ENCODE measurements at regions of chr14 and their contacts with region 1.

Region 1: GRCh38 chr14:61568572-61569131 is 126.7 kb upstream of the HIF1A start:
- DNase-seq: peak; percentile 71
- H3K4me3 Mint-ChIP-seq: peak overlapping the region; percentile 73
- H3K27ac Mint-ChIP-seq: peak overlapping the region; percentile 91
- H3K4me1 Mint-ChIP-seq: peaks cover 87% of the 10 kb centered on the region
- H3K27me3 Mint-ChIP-seq: no peaks in the 10 kb centered on the region

Region 2: GRCh38 chr14:61342486-61342885 is 226.2 kb before region 1 on chr14:
- CTCF ChIA-PET with region 1: no interaction called
- intact Hi-C with region 1: loop called (anchors 5 kb)
- DNase-seq: peak; percentile 86
- H3K4me3 Mint-ChIP-seq: peak overlapping the region; percentile 66
- H3K27ac Mint-ChIP-seq: peak overlapping the region; percentile 97
- H3K4me1 Mint-ChIP-seq: peaks cover 96% of the 10 kb centered on the region
- H3K27me3 Mint-ChIP-seq: no peaks in the 10 kb centered on the region

Region 3: GRCh38 chr14:61525293-61526011 is 43.2 kb before region 1 on chr14:
- CTCF ChIA-PET with region 1: no interaction called
- intact Hi-C with region 1: loop called (anchors 1 kb)
- DNase-seq: peak; percentile 91
- H3K4me3 Mint-ChIP-seq: peak overlapping the region; percentile 22
- H3K27ac Mint-ChIP-seq: peak overlapping the region; percentile 94
- H3K4me1 Mint-ChIP-seq: peaks cover 84% of the 10 kb centered on the region
- H3K27me3 Mint-ChIP-seq: no peaks in the 10 kb centered on the region